ENCODE measurements at regions of chr14 and their contacts with region 1.

Region 1: GRCh38 chr14:105366386-105367074 is 31.8 kb upstream of the TEX22 start:
- DNase-seq: no peak
- ATAC-seq: no peak
- H3K4me3 ChIP-seq: no peak overlapping the region
- H3K27ac ChIP-seq: no peak overlapping the region
- H3K4me1 ChIP-seq: no peaks in the 10 kb centered on the region
- H3K27me3 ChIP-seq: no peaks in the 10 kb centered on the region
- CTCF ChIP-seq: no peak
- POLR2A ChIP-seq: no peak

Region 2: DNA sequence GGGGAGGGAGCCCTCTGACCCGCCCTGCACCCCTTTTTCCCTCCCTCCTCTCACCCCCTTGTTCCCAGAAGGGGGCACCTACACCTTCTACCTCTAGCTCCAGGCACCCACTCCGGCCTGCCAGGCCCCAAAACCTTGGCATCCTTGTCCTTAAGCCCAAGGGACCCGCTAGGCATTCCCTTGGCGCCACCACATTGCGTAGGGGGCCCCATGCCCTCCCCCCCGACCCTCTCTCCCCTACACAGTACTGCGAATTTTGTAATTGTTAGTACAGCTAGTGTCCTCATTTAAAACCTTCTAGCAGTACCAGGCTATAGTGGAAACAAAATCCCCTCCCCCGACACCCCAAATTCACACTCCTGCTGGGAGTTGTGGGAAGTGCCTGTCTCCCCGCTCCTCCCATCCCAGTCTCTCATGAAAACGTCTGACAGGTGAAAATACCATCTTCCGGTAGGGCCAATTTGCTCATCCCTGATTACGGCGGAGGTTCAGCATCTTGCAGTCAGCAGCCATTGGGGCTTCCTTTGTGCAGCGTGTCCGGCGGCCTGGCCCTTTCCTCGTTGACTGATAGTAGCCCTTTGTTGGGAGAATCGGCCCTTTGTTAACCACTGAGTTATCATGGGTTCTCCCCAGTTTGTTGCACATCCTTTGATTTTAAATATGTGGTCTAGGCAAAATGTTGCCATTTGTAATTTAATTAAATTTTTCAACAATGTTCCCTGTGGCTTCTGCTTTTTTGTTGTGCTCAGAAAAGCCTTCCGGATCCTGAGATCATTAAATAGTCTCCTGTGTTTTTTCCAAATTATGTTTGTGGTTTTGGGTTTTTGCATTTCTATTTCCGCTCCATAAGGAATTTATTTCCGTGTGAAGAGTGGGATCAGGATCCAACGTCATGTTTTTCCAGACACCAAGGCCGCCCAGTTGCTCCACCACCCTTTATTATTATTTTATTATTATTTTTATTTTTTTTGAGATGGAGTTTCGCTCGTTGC is 509.4 kb before region 1 on chr14:
- intact Hi-C with region 1: no loop called
- DNase-seq: no peak
- ATAC-seq: peak; percentile 12
- H3K4me3 ChIP-seq: no peak overlapping the region
- H3K27ac ChIP-seq: no peak overlapping the region
- H3K4me1 ChIP-seq: no peaks in the 10 kb centered on the region
- H3K27me3 ChIP-seq: no peaks in the 10 kb centered on the region
- CTCF ChIP-seq: no peak
- POLR2A ChIP-seq: no peak

Region 3: DNA sequence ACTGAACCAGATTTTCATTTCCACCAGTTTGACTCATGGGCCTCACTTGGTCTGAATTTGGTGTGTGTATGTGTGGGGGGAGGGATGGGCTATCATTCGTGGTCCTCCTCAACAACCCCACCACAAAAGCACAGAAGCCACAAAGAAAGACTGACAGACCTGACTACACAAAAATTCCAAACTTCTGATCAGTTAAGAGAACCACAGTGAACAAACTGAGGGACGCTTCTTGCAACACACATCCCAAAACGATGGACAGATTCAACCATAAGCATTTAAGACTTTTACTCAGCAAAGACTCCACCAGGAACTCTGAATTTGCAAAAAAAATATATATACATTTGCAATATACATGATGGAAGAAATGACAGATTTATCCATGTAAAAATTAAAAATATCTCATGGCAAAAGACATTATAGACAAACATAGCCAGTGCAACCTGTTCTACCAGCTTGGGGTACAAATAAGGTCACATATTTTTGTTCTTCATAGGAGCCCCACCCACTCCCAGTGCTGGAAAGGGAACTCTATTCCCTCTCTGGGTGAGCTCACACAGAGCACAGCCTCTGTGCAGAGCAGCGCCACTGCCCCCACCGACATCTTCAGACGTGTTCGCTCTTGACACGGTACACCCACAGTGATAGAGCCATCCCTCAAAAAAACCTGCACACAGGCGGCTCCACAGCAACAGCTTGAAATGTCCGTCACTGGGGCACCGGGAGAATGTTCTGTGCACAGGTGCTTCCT is 247.7 kb before region 1 on chr14:
- intact Hi-C with region 1: no loop called
- DNase-seq: peak in 3 of 4 donors; percentile 40 to 45 (median 40)
- ATAC-seq: peak; percentile 68
- H3K4me3 ChIP-seq: no peak overlapping the region
- H3K27ac ChIP-seq: peak overlapping the region in 2 of 4 donors; percentile 19 to 21
- H3K4me1 ChIP-seq: peaks cover 10% of the 10 kb centered on the region
- H3K27me3 ChIP-seq: no peaks in the 10 kb centered on the region
- CTCF ChIP-seq: no peak
- POLR2A ChIP-seq: peak in 1 of 3 donors; percentile 30

Region 4: DNA sequence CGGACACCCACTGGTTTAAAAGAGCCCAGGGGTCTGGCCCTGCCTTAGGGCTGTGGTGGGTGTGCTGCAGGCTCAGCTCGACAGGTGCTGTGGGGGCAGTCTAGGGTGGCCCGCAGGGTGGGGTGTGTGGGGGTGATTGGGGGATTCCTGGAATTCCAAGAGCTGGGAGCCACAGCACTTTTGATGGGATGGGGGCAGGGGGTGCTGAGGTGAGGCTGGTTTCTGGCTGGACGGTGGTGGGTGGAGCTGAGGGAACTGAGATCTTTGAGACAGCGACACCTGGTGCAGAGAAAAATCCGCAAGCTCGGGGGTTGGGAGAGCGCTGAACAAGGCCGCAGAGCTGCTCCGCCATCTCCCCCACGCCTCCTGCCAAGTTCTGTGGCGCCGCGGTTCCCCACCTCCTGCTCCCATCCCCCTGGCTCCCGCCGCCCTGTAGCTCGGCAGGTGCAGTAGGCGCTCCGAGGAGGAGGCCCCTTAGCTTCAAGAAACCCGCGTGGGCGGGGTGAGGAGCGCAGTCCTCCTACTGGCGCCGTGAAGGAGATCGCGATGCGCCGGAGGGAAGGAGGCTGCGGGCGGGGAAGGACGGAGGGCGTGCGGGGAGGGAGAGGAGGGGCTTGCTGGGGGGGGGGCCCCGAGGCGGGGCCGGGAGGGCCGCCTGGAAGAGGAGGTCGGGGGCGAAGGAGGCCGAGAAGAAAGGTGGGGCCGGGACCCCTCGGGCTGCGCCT is 123.2 kb after region 1 on chr14:
- intact Hi-C with region 1: loop called (anchors 5 kb)
- DNase-seq: peak; percentile 92 to 93 (median 92)
- ATAC-seq: peak; percentile 39
- H3K4me3 ChIP-seq: peak overlapping the region; percentile 2 to 24
- H3K27ac ChIP-seq: peak overlapping the region; percentile 88 to 98 (median 92)
- H3K4me1 ChIP-seq: peaks cover 59% of the 10 kb centered on the region
- H3K27me3 ChIP-seq: peaks cover 0 to 18% of the 10 kb centered on the region in 2 donors
- CTCF ChIP-seq: peak; percentile 48 to 93 (median 84)
- POLR2A ChIP-seq: peak; percentile 48 to 84 (median 64)

Region 5: DNA sequence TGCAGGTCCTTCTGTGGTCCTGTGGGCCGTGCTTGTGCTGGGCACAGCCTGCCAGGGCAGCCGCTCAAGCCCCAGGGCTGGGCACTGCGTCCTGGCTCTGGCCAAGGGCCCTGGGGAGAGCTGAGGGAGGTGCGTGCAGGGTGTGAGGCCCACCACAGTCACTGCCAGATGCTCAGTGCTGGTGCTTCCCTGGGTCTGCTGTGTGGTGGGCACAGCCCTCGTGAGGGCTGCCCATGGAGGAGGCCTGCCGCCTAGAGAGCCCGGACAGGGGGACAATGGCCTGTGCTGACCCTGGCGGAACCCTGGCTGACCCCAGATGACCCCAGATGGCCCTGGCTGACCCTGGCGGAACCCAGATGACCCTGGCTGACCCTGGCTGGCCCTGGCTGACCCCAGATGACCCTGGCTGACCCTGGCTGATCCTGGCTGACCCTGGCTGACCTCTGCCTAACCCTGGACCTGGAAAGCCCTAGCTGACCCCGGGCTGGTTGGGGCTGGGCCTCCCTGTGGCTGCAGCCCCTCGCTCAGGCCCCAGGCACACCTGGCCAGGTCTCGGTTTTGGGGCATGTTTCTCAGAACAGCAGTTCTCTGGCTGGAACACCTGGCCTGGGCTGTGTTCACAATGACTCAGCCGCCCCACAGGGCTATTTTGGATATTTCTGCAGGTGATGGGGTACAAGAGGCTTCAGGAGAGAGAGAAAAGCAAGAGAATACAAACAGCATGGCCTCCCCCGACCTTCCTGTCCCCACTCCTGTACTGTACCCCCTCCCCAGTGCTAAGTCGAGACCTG is 215.2 kb after region 1 on chr14:
- intact Hi-C with region 1: no loop called
- DNase-seq: no peak
- ATAC-seq: no peak
- H3K4me3 ChIP-seq: no peak overlapping the region
- H3K27ac ChIP-seq: no peak overlapping the region
- H3K4me1 ChIP-seq: no peaks in the 10 kb centered on the region
- H3K27me3 ChIP-seq: no peaks in the 10 kb centered on the region
- CTCF ChIP-seq: no peak
- POLR2A ChIP-seq: no peak

Region 6: GRCh38 chr14:106069804-106070625 is 703.5 kb after region 1 on chr14:
- intact Hi-C with region 1: no loop called
- DNase-seq: no peak
- ATAC-seq: no peak
- H3K4me3 ChIP-seq: no peak overlapping the region
- H3K27ac ChIP-seq: no peak overlapping the region
- H3K4me1 ChIP-seq: no peaks in the 10 kb centered on the region
- H3K27me3 ChIP-seq: no peaks in the 10 kb centered on the region
- CTCF ChIP-seq: no peak
- POLR2A ChIP-seq: no peak